ENCODE measurements at regions of chr2 and their contacts with region 1.

Region 1: GRCh38 chr2:229586746-229587705 is 127.3 kb downstream of the DNER start:
- ATAC-seq: peak; percentile 92 to 99 (median 96)
- H3K4me3 ChIP-seq: peak overlapping the region in 1 of 5 donors; percentile 7
- H3K27ac ChIP-seq: no peak overlapping the region
- H3K4me1 ChIP-seq: peaks cover 13% of the 10 kb centered on the region in 2 donors

Region 2: GRCh38 chr2:229431327-229431954 is 155.6 kb before region 1 on chr2:
- in situ Hi-C with region 1: loop called in 2 of 9 experiments (anchors 10 to 25 kb)
- ATAC-seq: peak in 3 of 8 experiments; percentile 38 to 63 (median 50)
- H3K4me3 ChIP-seq: no peak overlapping the region
- H3K27ac ChIP-seq: no peak overlapping the region
- H3K4me1 ChIP-seq: peaks cover 9 to 28% of the 10 kb centered on the region in 2 donors

Region 3: DNA sequence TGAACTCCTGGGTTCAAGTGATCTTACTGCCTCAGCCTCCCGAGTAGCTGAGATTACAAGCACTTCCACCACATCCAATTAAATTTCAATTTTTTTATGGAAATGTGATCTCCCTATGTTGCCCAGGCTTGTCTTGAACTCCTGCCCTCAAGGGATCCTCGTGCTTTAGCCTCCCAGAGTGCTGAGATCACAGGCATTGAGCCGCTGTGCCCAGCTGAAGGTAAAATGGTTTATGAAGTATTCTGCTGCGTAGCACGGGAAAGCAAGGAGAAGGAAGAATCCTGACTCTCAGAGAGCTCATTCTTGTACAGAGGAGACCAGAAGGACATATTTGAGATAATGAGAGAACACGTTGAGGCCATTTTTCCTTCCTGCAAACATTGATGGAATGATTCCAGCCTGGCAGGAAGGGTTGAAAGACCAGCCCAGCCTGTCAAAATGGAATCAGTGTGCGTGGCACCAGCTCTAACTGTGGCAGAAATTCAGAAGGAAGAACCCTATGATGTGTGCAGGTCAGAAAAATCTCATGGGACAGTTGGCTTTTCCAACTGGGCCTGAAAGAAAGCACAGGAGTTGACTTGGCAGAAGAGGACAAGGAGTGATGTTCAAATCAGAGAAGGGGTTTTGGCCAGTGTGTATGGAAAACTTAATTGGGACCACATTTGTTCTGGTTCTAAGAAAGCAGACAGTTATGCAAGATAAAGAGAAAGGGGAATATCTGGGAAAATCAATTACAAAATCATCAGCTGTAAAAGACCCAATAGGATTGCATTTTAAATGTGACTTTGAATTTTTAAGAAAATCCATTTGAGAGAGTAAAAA is 123.3 kb before region 1 on chr2:
- in situ Hi-C with region 1: no loop called
- ATAC-seq: no peak
- H3K4me3 ChIP-seq: no peak overlapping the region
- H3K27ac ChIP-seq: no peak overlapping the region
- H3K4me1 ChIP-seq: no peaks in the 10 kb centered on the region